Lower leg skin (tissue), 4 donors: ENCODE measurements at regions of chr14 and their contacts with region 1.

Region 1: DNA sequence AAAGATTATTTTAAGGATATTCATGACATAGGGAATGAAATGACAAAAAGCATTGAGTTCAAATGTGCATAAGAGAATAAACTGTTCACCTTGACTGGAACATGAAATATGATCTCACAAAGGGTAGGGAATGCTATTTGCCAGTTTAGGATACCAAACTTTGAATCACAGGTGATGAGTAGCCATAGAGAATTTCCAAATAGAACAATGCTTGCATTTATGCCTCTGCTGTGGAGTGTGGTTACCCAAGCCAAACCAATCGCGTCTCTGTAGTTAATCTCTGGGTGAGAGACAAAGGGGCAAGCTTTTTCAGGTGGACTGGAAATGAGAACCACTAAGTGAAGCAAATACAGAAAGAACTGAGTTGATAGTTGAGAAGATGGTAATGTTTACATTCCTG is 371.1 kb upstream of the RPL10L start:
- DNase-seq: no peak
- H3K4me3 ChIP-seq: no peak overlapping the region
- CTCF ChIP-seq: no peak
- POLR2A ChIP-seq: no peak

Region 2: DNA sequence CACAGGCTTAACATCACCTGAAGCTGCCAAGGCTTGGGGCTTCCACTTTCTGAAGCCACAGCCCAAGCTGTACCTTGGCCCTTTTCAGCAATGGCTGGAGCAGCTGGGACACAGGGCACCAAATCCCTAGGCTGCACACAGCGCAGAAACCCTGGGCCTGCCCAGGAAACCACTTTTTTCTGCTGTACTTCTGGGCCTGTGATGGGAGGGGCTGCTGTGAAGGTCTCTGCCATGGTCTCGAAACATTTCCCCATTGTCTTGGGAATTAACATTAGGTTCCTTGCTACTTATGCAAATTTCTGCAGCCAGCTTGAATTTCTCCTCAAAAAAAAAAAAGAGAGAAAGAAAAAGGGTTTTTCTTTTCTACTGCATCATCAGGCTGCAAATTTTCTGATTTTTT is 590.2 kb before region 1 on chr14:
- intact Hi-C with region 1: no loop called
- DNase-seq: no peak
- H3K4me3 ChIP-seq: no peak overlapping the region
- CTCF ChIP-seq: no peak
- POLR2A ChIP-seq: no peak

Region 3: GRCh38 chr14:47039336-47039931 is 16.7 kb after region 1 on chr14:
- intact Hi-C with region 1: loop called (anchors 2 kb)
- DNase-seq: no peak
- H3K4me3 ChIP-seq: no peak overlapping the region
- CTCF ChIP-seq: no peak
- POLR2A ChIP-seq: no peak